Activated CD4-positive, alpha-beta memory T cell treated with anti-CD3 and anti-CD28 coated beads, Interleukin-2, amount 10 ng/mL, durations not matched to agents 7 days and 5 days (primary cell): ENCODE measurements at regions of chr9 and their contacts with region 1.

Region 1: DNA sequence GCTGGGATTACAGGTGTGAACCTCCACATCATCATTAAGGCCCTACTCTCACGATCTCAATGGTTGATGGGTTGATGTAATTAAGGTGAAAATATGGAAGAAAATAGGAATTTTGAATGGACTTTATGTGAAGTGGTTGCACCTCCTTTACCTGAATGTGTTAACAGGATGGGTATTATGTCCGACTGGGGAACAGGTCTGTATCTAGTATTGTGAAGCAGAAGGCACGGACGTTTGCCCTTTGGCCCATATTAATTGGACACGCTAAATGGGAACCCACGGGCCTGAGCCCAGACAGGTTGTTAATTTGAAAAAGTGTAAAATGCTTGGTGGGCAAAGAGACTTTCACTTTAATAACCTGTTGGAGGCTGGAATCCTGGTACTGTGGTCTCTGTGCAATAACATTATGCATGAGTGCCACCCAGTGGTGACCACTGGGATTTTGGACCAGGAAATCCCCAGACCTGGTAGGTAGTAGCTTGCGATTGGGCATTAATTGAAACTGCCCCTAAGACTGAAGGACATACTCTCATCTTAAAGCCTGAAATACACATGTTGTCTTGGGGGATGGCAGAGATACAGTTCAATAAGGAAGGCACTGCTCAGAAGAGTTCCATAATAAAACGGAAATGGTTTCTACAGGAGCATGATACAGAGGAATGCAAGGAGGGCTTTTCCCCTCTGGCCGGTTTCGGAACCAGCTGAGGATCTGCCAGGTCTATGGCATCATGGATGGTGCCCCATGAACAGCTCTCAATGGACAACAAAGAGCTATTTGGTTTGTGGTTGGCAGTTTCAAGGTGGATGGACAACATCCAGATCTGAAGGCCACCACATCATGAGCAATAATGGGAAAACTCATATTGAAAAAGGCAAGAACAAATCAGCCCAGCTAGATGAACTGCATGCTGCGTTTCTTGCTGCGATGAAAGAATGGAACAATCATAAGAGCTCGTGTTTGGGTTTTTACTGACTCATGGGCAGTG is 26.2 kb upstream of the BICD2 start:
- DNase-seq: peak; percentile 79
- H3K4me3 Mint-ChIP-seq: no peak overlapping the region
- H3K27ac Mint-ChIP-seq: no peak overlapping the region
- H3K4me1 Mint-ChIP-seq: peaks cover 12% of the 10 kb centered on the region
- H3K27me3 Mint-ChIP-seq: peaks cover 16% of the 10 kb centered on the region

Region 2: GRCh38 chr9:92716557-92716956 is 74.3 kb before region 1 on chr9:
- CTCF ChIA-PET with region 1: interaction called, 32 read pairs
- POLR2A ChIA-PET with region 1: interaction called, 3 read pairs
- DNase-seq: peak; percentile 80
- H3K4me3 Mint-ChIP-seq: no peak overlapping the region
- H3K27ac Mint-ChIP-seq: no peak overlapping the region
- H3K4me1 Mint-ChIP-seq: peaks cover 22% of the 10 kb centered on the region
- H3K27me3 Mint-ChIP-seq: no peaks in the 10 kb centered on the region

Region 3: GRCh38 chr9:92764988-92765936 is 25.6 kb before region 1 on chr9:
- CTCF ChIA-PET with region 1: interaction called, 16 read pairs
- POLR2A ChIA-PET with region 1: no interaction called
- DNase-seq: peak; percentile 99
- H3K4me3 Mint-ChIP-seq: peak overlapping the region; percentile 81
- H3K27ac Mint-ChIP-seq: peak overlapping the region; percentile 93
- H3K4me1 Mint-ChIP-seq: peaks cover 51% of the 10 kb centered on the region
- H3K27me3 Mint-ChIP-seq: no peaks in the 10 kb centered on the region

Region 4: GRCh38 chr9:92808726-92809451 is 18.1 kb after region 1 on chr9:
- CTCF ChIA-PET with region 1: interaction called, 10 read pairs
- POLR2A ChIA-PET with region 1: no interaction called
- DNase-seq: peak; percentile 62
- H3K4me3 Mint-ChIP-seq: peak overlapping the region; percentile 57
- H3K27ac Mint-ChIP-seq: no peak overlapping the region
- H3K4me1 Mint-ChIP-seq: peaks cover 18% of the 10 kb centered on the region
- H3K27me3 Mint-ChIP-seq: peaks cover 65% of the 10 kb centered on the region

Region 5: DNA sequence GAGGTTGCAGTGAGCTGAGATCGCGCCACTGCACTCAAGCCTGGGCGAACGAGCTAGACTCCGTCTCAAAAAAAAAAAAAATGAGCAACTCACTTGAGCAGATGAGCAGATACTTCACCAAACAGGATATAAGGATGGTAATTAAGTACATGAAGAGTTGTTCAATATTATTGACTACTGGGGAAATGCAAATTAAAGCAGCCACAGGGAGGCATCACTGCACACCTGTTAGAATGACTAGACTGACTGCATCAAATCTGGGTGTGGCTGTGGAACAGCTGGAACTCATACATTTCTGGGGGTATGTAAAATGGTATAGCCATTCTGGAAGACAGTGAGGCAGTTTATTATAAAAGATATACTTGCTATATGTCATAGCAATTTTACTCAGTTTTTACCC is 486.1 kb after region 1 on chr9:
- CTCF ChIA-PET with region 1: no interaction called
- POLR2A ChIA-PET with region 1: no interaction called
- DNase-seq: peak; percentile 16
- H3K4me3 Mint-ChIP-seq: no peak overlapping the region
- H3K27ac Mint-ChIP-seq: no peak overlapping the region
- H3K4me1 Mint-ChIP-seq: no peaks in the 10 kb centered on the region
- H3K27me3 Mint-ChIP-seq: peaks cover 63% of the 10 kb centered on the region